ENCODE measurements at regions of chr3 and their contacts with region 1.

Region 1: GRCh38 chr3:179322286-179323196 is at the start of gene ZNF639:
- DNase-seq: peak; percentile 87
- ATAC-seq: peak; percentile 94
- total RNA-seq, gene ZNF639: 32.3 TPM

Region 2: GRCh38 chr3:179015551-179016020 is 307.0 kb before region 1 on chr3:
- intact Hi-C with region 1: loop called (anchors 5 kb)
- DNase-seq: no peak
- ATAC-seq: peak; percentile 84

Region 3: GRCh38 chr3:179604321-179605078 is 282.0 kb after region 1 on chr3 and contains the starts of genes MRPL47 and NDUFB5:
- intact Hi-C with region 1: loop called (anchors 5 kb)
- DNase-seq: peak; percentile 96
- ATAC-seq: peak; percentile 100
- total RNA-seq, gene MRPL47: 20.7 TPM
- total RNA-seq, gene NDUFB5: 61.8 TPM

Region 4: DNA sequence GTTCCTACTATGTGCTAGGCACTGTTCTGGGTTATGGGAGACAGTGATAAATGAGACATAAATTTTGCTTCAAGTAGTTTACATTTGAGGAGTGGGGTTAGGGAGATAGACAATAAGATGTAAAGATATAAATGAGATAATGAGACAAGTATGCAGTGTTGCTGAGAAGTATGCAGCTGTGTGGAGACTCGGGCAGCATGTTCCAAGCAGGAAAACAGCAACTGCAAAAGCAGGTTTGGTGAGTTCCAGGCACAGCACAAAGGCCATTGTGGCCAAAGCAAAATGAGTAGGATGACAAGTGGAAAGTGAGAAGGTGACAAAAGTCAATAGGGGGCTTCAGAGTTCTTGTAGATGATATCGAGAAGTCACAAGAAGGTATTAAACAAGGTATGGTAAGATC is 973.2 kb after region 1 on chr3:
- intact Hi-C with region 1: no loop called
- DNase-seq: no peak
- ATAC-seq: no peak

Region 5: DNA sequence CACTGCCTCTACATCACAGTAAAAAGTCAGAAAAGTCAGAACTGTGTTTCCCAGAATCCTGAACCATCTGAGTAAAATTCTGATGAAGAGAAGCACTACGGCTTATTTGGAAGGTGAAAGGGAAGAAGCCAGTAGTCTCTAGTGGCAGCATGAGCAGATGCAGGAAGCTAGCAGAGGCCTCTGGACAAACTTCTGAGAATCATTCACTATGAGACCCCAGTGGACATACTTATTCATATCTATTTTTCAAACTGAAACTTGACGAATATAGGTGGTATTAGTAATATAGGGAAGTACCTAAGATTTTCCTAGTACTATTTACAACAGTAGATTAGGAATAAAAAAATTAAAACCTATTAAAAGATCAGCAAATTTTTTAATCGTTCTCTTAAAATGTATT is 1006.6 kb after region 1 on chr3:
- intact Hi-C with region 1: no loop called
- DNase-seq: no peak
- ATAC-seq: no peak